A549 (cell line): ENCODE measurements at regions of chr17 and their contacts with region 1.

Region 1: GRCh38 chr17:45148183-45149036 is at the start of gene HEXIM1:
- DNase-seq: peak; percentile 99 to 100
- ATAC-seq: peak; percentile 74 to 86
- H3K4me3 ChIP-seq: peak within 1 kb of the TSS; percentile 74
- H3K27ac ChIP-seq: peak within 1 kb of the TSS; percentile 97 to 98
- H3K4me1 ChIP-seq: peaks cover 27% of the 10 kb centered on the region
- CTCF ChIP-seq: no peak
- EP300 ChIP-seq: no peak
- POLR2A ChIP-seq: peak; percentile 100
- RAD21 ChIP-seq: peak in 1 of 2 experiments; percentile 7; a peak in 1 of 5 replicates
- polyA plus RNA-seq, gene HEXIM1: 39.3 and 54.0 TPM in 2 replicates

Region 2: DNA sequence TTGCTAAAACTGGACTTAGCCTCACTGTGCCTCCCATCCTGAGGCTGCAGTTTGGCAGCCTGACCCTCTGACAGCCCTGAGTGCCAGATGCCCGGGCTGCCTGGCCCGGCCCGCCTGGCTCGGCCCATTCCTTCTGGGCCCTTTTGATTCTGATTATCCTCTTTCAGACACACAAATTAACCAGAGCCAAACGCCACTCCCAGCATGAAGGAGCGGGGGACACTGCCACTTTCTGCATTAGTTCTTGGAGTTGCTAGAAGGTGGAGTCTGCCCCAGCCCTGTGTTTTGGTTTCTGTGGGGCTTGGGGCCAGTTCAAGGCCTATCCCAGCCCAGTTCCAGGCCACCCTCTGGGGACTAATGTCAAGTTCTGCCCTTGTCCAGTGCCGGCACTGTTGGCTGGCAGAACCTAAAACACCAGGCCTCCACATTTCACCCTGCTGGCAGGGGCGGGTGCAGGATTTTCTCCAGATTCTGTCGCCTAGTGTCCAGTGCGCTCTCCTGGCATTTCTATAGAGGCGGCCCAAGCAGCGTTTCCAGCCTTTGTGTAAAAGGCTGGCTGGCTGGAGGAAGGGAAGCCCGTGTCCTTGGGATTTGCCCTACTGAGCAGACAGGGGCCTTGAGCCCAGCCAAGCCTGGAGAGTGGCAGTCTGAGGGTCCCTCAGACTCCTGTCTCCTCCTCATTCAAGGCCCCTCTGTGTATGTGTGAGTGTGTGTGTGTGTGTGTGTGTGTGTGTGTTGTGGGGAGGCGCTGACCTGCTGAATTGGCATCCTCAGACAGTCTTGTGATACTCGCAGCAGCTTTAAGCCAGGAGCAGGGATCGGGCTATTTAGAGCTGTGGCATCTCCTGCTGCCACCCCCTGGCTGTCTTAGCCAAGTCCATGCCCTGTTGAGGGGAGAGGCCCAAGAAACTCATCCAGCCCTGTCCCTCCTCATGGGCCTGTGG is 37.5 kb before region 1 on chr17:
- CTCF ChIA-PET with region 1: interaction called, 10 read pairs
- POLR2A ChIA-PET with region 1: interaction called, 12 read pairs
- DNase-seq: no peak
- ATAC-seq: peak in 1 of 2 experiments; percentile 22; a peak in 3 of 6 replicates
- H3K4me3 ChIP-seq: no peak overlapping the region
- H3K27ac ChIP-seq: peak overlapping the region in 1 of 2 experiments; percentile 48; a peak in 3 of 6 replicates
- H3K4me1 ChIP-seq: no peaks in the 10 kb centered on the region
- CTCF ChIP-seq: no peak
- EP300 ChIP-seq: no peak
- POLR2A ChIP-seq: no peak
- RAD21 ChIP-seq: no peak

Region 3: GRCh38 chr17:45184144-45184543 is 35.7 kb after region 1 on chr17:
- CTCF ChIA-PET with region 1: interaction called, 2,147 read pairs
- POLR2A ChIA-PET with region 1: interaction called, 35 read pairs
- DNase-seq: no peak
- ATAC-seq: no peak
- H3K4me3 ChIP-seq: no peak overlapping the region
- H3K27ac ChIP-seq: peak overlapping the region; percentile 60 to 79
- H3K4me1 ChIP-seq: peaks cover 23% of the 10 kb centered on the region
- CTCF ChIP-seq: no peak
- EP300 ChIP-seq: no peak
- POLR2A ChIP-seq: no peak
- RAD21 ChIP-seq: no peak

Region 4: DNA sequence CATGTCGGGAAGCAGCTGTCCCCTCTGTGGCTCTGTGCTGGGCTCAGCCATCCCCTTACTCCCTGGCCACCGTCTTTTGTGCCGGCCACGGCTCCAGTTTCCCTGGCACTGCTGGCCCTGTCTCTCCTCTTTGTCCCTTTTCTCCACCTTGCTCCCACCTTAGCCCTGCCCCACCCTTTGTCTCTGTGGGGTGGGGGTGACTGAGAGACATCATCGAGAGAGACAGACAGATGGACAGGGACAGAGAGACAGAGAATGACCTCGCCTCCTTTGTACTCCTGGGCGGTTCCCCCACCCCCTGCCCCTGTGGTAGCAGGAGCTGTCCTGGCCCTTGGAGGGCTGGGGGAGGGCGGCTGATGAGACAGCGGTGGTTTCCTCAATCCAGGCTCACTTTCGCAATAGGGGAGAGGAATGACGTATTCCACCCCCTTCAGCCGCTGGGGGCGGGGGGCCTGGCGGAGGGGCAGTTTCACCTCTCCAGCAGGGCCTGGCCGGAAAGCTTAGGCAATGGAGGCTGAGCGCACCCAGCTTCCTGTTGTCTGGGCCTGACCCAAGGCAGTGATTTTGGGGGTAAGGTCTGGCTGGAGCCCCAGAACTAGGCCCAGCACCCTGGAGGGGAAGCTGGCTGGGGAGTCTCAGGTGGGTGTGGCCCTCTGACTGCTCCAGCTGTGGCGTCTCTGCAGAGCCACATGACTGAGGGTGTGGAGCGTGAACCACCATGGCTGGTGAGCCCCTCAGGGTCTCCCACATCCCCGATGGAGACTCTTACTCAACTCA is 80.5 kb after region 1 on chr17:
- CTCF ChIA-PET with region 1: interaction called, 2,147 read pairs
- POLR2A ChIA-PET with region 1: interaction called, 37 read pairs
- DNase-seq: peak; percentile 96 to 99
- ATAC-seq: peak; percentile 63 to 77
- H3K4me3 ChIP-seq: peak overlapping the region; percentile 9; the same call in 1 of the 3 replicates
- H3K27ac ChIP-seq: peak overlapping the region; percentile 97
- H3K4me1 ChIP-seq: peaks cover 85% of the 10 kb centered on the region
- CTCF ChIP-seq: no peak
- EP300 ChIP-seq: peak; percentile 93 to 99
- POLR2A ChIP-seq: peak; percentile 33
- RAD21 ChIP-seq: no peak; a peak in 3 of 5 replicates

Region 5: DNA sequence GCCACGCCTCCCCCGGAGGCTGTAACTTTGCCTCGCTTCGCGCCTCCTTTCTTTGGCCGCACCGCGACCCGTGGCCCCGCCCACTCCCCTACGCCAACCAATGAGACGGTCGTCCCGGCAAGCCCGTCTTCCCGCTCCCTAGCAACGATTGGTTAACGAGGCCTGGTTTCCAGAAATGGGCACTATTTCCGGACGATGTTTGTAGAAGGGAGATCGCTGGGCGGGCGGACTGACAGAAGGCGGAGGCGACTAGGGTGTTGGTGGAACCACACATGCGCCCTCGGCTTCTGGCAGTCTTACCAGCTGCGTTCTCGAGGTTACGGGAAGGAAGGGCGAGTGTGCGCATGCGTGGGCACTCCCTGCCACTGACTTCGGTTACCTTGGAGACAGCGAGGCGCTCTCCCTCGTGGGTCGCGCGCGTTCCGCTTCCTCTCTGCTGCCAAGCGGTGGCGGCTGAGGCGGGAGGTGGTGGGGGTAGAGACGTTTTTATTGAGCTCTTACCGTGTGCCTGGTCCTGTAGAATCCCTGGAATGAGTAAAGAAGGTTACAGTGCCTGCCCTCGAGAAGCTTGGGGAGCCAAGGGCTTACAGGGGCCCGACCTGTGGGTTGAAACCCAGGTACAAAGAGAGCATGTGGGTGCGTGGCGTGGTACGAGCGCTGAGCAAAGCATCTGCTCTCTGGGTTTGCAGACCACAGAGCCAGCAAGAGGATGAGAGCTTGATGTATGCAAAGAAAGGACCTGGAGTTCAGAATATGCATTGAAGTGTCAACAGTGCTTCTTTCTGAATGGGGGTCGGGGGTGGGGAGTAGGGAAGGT is 168.9 kb after region 1 on chr17:
- CTCF ChIA-PET with region 1: interaction called, 6 read pairs
- POLR2A ChIA-PET with region 1: interaction called, 30 read pairs
- DNase-seq: peak; percentile 100
- ATAC-seq: peak; percentile 79 to 83
- H3K4me3 ChIP-seq: peak overlapping the region; percentile 69
- H3K27ac ChIP-seq: peak overlapping the region; percentile 95
- H3K4me1 ChIP-seq: peaks cover 73% of the 10 kb centered on the region
- CTCF ChIP-seq: no peak
- EP300 ChIP-seq: no peak
- POLR2A ChIP-seq: peak; percentile 68
- RAD21 ChIP-seq: no peak